ENCODE measurements at regions of chr19 and their contacts with region 1.

Region 1: DNA sequence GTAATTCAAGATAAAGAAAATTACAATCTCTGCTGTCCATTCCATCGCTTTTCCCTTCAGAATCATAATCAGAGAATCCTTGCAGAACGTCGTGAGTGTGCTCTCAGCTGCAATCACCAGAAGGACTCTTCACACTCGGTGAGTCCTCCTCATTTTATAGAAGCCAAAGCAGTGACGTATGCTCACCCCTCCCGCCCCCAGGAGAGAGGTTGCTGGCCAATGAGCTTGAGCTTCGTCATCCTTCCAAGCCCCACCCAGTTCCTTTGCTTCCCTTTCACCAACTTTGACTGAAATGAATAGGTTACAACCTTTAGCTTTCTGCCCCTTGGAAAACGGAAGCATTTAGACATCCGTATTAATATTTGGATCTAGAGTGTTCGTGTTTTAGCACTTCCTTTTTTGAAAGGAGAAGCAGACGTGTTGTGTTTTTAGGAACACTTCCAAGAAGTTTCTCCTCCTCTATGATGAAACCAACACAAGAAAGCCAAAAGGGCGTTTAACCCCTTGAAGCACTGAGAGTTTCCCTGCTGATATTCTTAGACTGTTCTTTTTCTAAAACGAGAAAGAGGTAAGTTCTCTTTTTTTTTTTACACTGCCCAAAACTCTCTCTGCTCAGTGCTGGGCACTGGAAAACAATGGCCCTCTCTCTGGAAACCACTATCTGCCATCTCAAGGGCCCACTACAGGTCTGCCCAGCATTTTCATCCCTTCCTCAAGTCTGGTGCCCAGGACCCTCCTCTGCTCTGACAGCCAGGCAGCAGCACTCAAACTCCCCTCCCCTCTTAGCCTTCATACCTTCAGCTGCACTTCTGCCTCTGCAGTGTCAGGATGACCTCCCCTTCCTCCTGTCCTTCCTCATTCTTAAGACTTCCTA is 44.3 kb upstream of the CEACAM21 start:
- DNase-seq: peak; percentile 90
- H3K4me3 ChIP-seq: peak overlapping the region; percentile 70
- H3K27ac ChIP-seq: peak overlapping the region; percentile 96
- H3K4me1 ChIP-seq: peaks cover 88% of the 10 kb centered on the region
- CTCF ChIP-seq: no peak

Region 2: GRCh38 chr19:41548954-41549688 is 17.4 kb after region 1 on chr19:
- CTCF ChIA-PET with region 1: no interaction called
- POLR2A ChIA-PET with region 1: interaction called, 11 read pairs
- intact Hi-C with region 1: loop called (anchors 1 kb)
- DNase-seq: peak; percentile 95
- H3K4me3 ChIP-seq: peak overlapping the region; percentile 84
- H3K27ac ChIP-seq: peak overlapping the region; percentile 99
- H3K4me1 ChIP-seq: peaks cover 71% of the 10 kb centered on the region
- CTCF ChIP-seq: no peak